ENCODE measurements at regions of chr16 and their contacts with region 1.

Region 1: DNA sequence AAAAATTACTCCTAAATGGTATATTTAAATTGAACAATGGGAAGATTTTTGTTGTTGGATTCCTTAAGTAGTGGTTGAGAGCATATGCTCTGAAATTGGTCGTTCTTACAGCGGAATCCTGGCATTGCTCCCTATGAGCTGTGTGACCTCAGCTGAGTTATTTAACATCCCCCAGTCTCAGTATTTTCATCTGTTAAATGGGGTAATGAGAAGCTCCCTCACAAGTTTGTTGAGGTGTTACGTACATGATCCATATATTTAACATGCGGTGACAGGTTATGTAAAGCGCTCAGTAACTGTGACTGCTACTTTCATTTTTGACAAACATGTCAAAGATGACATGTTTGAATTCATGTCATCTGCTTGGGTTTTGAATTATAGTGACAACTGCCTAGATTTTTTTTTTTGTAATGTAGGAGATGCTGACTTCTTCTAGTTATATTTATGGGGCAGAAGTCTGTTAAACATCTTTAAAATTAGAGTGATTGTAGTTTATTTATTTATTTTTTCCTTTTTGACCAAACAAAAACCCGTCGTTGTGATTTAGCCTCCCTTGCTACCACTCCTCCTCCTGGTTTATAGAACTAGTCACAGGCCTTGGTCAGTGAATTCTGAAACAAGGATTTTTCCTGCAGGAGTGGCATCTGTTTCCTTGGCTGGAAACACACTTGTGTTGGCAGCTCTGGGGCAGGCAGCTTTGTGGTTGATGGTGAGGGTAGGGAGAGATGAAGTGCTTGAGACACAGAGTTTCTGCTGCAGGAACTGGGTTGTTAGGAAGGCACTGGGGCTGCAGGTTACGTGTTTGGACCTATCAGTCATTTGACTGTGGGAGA is 268.8 kb downstream of the SNX29 start:
- DNase-seq: no peak
- ATAC-seq: no peak
- H3K4me3 ChIP-seq: no peak overlapping the region
- H3K27ac ChIP-seq: no peak overlapping the region
- H3K4me1 ChIP-seq: peaks cover 0 to 6% (median under 1%) of the 10 kb centered on the region in 12 donors
- H3K27me3 ChIP-seq: no peaks in the 10 kb centered on the region
- CTCF ChIP-seq: no peak
- POLR2A ChIP-seq: no peak

Region 2: DNA sequence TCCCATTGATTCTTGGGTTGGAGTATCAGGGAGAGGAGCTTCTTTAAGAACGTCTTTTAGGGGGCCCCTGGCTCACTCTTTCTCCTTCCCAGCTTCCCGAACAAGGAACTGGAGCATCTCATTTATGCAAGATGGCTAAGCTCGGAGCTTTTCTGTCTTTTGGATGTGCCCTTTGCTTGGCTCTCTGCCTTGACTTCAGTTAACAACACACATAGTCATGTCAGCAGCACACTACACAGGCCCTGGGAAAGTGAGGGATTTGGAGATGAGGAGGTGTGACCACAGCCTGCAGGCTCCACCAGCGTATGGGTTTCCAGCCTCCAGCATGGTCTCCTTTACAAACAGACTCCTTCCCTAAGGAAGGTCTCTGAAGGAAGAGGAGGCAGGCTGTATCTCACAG is 41.7 kb after region 1 on chr16:
- intact Hi-C with region 1: no loop called
- DNase-seq: no peak
- ATAC-seq: no peak
- H3K4me3 ChIP-seq: no peak overlapping the region
- H3K27ac ChIP-seq: no peak overlapping the region
- H3K4me1 ChIP-seq: peaks cover 0 to 17% (median 1%) of the 10 kb centered on the region in 12 donors
- H3K27me3 ChIP-seq: no peaks in the 10 kb centered on the region
- CTCF ChIP-seq: no peak
- POLR2A ChIP-seq: no peak

Region 3: DNA sequence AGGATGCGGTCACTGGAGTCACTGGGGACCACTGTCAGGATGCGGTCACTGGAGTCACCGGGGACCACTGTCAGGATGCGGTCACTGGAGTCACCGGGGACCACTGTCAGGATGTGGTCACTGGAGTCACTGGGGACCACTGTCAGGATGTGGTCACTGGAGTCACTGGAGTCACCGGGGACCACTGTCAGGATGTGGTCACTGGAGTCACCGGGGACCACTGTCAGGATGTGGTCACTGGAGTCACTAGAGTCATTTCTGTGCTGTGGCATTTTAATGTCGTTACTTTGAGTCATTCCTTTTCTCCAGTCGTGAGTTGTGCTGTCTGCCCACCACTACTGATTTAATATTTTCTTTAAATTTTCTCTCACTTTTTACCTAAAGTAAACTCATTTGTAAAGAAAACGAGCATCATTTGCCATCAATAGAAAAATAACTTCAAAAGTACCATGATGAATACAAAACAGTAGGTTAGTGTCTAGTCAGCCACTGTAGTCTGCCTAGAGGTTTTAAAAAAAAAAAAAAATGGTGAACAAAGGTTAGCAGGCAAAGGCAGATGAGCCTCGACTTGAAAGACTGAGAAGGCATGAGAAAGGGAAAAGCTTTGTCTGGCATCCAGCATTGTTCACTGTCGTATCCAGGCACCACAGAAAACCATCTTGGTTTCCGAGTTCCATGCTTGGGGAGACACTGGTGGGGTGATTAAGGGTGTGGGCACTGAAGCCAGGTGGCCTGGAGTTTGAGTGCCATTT is 77.9 kb after region 1 on chr16:
- intact Hi-C with region 1: loop called in 1 of 10 experiments (anchors 5 kb)
- DNase-seq: no peak
- ATAC-seq: no peak
- H3K4me3 ChIP-seq: no peak overlapping the region
- H3K27ac ChIP-seq: peak overlapping the region in 1 of 12 donors; percentile 30
- H3K4me1 ChIP-seq: peaks cover 0 to 9% (median 0%) of the 10 kb centered on the region in 12 donors
- H3K27me3 ChIP-seq: no peaks in the 10 kb centered on the region
- CTCF ChIP-seq: no peak
- POLR2A ChIP-seq: no peak